Dendritic cell treated with granulocyte-macrophage colony-stimulating factor and Interleukin-4, amounts not matched to agents 40 ng/mL and 50 ng/mL, for 4 days (primary cell): ENCODE measurements at regions of chr2 and their contacts with region 1.

Region 1: DNA sequence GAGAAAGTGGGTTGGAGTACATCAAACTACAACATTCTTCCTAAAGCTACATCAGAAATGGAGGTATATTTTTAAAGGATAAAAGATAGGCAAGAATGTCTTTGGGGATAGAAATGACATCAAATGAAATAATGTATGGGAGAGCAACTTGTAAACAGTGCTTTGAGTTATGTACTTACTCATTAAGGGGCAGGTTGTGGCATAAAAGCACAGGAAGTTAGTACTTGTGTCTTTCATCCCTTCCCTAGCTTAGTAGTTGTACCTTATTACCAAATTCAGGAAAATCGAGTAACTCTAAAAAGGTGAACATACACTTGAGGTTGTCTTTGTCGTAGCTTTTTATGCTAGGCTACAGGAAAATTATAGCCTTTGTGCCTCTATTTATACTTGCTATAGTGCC is 28.9 kb downstream of the PPP1CB start:
- H3K4me3 Mint-ChIP-seq: no peak overlapping the region
- H3K27ac Mint-ChIP-seq: no peak overlapping the region
- H3K4me1 Mint-ChIP-seq: peaks cover 19% of the 10 kb centered on the region
- H3K27me3 Mint-ChIP-seq: no peaks in the 10 kb centered on the region

Region 2: GRCh38 chr2:28377984-28378678 is 402.4 kb before region 1 on chr2:
- intact Hi-C with region 1: no loop called
- H3K4me3 Mint-ChIP-seq: peak overlapping the region; percentile 39
- H3K27ac Mint-ChIP-seq: peak overlapping the region; percentile 34
- H3K4me1 Mint-ChIP-seq: peaks cover 46% of the 10 kb centered on the region
- H3K27me3 Mint-ChIP-seq: peaks cover 38% of the 10 kb centered on the region

Region 3: GRCh38 chr2:28445448-28446258 is 334.8 kb before region 1 on chr2:
- intact Hi-C with region 1: no loop called
- H3K4me3 Mint-ChIP-seq: no peak overlapping the region
- H3K27ac Mint-ChIP-seq: peak overlapping the region; percentile 92
- H3K4me1 Mint-ChIP-seq: peaks cover 82% of the 10 kb centered on the region
- H3K27me3 Mint-ChIP-seq: no peaks in the 10 kb centered on the region

Region 4: GRCh38 chr2:28566521-28567041 is 213.9 kb before region 1 on chr2:
- intact Hi-C with region 1: loop called (anchors 10 kb)
- H3K4me3 Mint-ChIP-seq: peak overlapping the region; percentile 88
- H3K27ac Mint-ChIP-seq: peak overlapping the region; percentile 90
- H3K4me1 Mint-ChIP-seq: no peaks in the 10 kb centered on the region
- H3K27me3 Mint-ChIP-seq: no peaks in the 10 kb centered on the region

Region 5: DNA sequence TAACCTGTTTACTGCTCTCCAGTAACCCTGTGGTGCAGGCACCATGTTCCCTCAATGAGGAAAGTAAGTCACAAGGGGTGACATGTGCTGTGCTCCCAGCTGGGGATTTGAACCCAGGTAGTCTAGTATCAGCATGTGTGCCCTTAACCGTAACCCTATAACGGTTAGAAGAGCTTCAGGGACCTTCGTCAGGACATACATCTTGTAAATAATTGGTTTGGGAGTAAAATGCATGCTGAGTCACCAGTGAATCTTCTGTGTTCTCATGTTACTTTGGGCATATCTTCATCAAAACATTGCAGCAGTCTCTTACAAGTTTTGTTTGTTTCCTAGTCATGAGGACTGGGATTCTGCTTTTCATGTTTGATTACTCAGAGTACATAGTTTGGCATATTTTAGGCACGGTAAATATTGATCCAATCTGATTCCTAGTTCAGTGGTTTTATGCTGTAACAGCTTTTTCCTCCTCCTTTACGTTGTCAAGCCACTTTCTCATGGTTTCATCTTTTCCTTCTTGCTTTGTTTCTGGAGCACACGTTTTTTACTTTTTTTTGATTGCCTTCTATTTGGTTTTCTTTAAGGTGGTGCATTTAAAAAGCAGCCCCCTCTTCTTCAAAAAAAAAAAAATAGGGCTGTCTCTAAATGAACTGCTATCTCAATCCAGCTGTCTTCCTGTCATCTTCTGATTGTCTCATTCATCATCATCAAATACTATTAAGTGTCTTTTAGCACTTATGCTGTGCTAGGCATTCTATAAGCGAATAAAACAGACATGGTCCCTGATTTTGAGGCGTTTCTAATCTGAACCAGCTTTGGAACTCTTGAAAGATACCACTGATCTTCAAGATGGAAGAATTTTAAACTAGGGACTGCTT is 385.1 kb after region 1 on chr2:
- intact Hi-C with region 1: no loop called
- H3K4me3 Mint-ChIP-seq: no peak overlapping the region
- H3K27ac Mint-ChIP-seq: no peak overlapping the region
- H3K4me1 Mint-ChIP-seq: no peaks in the 10 kb centered on the region
- H3K27me3 Mint-ChIP-seq: no peaks in the 10 kb centered on the region